ENCODE measurements at regions of chr2 and their contacts with region 1.

Region 1: GRCh38 chr2:64644177-64645004 is 9.3 kb downstream of the SERTAD2 start:
- DNase-seq: peak; percentile 62
- ATAC-seq: peak; percentile 67
- H3K4me3 ChIP-seq: peak overlapping the region; percentile 46 to 65 (median 54)
- H3K27ac ChIP-seq: peak overlapping the region; percentile 70
- H3K4me1 ChIP-seq: peaks cover 100% of the 10 kb centered on the region
- H3K27me3 ChIP-seq: no peaks in the 10 kb centered on the region
- CTCF ChIP-seq: no peak
- EP300 ChIP-seq: no peak
- POLR2A ChIP-seq: peak in 1 of 2 experiments; percentile 36; a peak in 1 of 4 replicates
- RAD21 ChIP-seq: no peak

Region 2: GRCh38 chr2:64586883-64587481 is 57.4 kb before region 1 on chr2:
- CTCF ChIA-PET with region 1: no interaction called
- POLR2A ChIA-PET with region 1: no interaction called
- in situ Hi-C with region 1: no loop called
- intact Hi-C with region 1: loop called (anchors 2 kb)
- DNase-seq: peak; percentile 35
- ATAC-seq: no peak
- H3K4me3 ChIP-seq: no peak overlapping the region
- H3K27ac ChIP-seq: no peak overlapping the region
- H3K4me1 ChIP-seq: no peaks in the 10 kb centered on the region
- H3K27me3 ChIP-seq: no peaks in the 10 kb centered on the region
- CTCF ChIP-seq: peak; percentile 72
- EP300 ChIP-seq: no peak
- POLR2A ChIP-seq: no peak
- RAD21 ChIP-seq: peak; percentile 40; the same call in 1 of the 2 replicates

Region 3: DNA sequence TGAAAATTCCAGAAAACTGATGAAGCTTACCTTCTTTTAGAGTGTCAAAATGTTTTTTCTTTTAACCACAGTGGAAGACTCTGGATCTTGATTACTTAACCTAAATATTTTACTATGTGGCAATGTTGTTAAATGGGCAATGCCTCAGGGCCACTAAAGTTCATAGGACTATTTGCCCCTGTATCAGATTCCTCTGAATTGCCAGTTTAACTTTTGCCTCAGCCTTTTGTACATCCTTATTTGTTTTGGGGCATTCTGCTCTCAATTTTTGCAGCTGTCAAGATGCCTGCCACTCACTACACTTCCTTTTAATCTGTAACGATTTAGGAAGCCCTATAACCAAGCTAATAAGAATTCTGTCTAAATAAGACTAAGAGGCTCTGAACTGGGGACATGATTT is 41.0 kb after region 1 on chr2:
- CTCF ChIA-PET with region 1: no interaction called
- POLR2A ChIA-PET with region 1: no interaction called
- in situ Hi-C with region 1: no loop called
- intact Hi-C with region 1: no loop called
- DNase-seq: peak; percentile 88
- ATAC-seq: peak; percentile 93
- H3K4me3 ChIP-seq: no peak overlapping the region; a peak in 1 of 6 replicates
- H3K27ac ChIP-seq: peak overlapping the region; percentile 28
- H3K4me1 ChIP-seq: peaks cover 48% of the 10 kb centered on the region
- H3K27me3 ChIP-seq: no peaks in the 10 kb centered on the region
- CTCF ChIP-seq: no peak
- EP300 ChIP-seq: peak in 1 of 2 experiments; percentile 88; a peak in 2 of 4 replicates
- POLR2A ChIP-seq: no peak
- RAD21 ChIP-seq: no peak

Region 4: DNA sequence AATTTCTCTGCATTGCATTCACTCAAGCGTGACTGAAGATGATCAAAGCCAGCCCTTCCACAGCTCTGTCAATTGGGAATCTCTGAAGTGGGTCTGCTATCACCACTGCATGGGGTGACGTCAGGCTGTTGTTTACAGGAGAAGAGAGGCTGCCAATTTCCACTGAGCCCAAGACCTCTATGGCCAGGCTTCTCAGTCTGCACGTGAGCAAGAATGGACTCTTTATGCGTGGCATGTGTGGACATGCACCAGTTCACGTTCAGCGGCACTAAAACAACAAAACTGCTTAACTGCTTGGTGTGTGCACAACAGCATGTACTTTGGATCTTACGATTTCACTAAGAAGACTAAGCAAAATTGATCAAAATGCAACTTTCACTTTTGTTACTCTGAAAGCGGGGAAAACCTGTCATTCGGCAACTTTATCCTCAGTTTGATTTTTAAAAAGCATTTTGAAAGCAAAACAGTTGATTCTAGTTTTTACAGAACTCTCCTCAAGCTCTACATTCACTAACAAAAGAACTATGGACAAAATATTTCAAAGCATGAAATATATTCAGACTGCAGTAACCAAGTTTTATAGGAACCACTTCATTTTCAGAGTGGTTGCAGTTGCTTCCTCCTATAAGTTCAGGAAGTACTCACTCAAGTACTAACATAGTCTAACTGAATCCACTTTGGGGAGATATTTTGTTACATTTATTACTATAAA is 86.3 kb after region 1 on chr2:
- CTCF ChIA-PET with region 1: no interaction called
- POLR2A ChIA-PET with region 1: interaction called, 13 read pairs
- in situ Hi-C with region 1: no loop called
- intact Hi-C with region 1: loop called (anchors 2 kb)
- DNase-seq: peak; percentile 94
- ATAC-seq: peak; percentile 91
- H3K4me3 ChIP-seq: peak overlapping the region; percentile 10 to 59 (median 46)
- H3K27ac ChIP-seq: peak overlapping the region; percentile 83
- H3K4me1 ChIP-seq: peaks cover 76% of the 10 kb centered on the region
- H3K27me3 ChIP-seq: no peaks in the 10 kb centered on the region
- CTCF ChIP-seq: no peak
- EP300 ChIP-seq: peak; percentile 81 to 89; a peak in 3 of 4 replicates
- POLR2A ChIP-seq: peak in 1 of 2 experiments; percentile 64; a peak in 2 of 4 replicates
- RAD21 ChIP-seq: no peak

Region 5: DNA sequence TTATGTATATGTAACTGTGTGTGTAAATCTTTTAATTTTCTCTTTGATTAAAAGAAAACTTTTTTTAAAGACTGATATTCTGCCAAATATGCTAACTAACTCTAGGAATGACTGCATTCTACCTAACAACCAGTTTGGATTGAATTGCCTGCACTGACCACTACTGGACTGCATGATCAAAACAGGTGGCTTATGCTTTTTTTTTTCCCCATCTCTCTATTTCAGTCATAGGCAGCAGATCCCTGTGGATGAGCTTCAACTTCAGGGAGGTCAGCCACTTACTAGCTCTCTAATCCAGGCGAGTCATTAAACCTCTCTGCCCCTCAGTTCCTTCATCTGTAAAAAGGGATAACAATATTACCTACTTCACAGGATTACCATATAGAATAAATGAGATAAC is 147.9 kb after region 1 on chr2:
- CTCF ChIA-PET with region 1: no interaction called
- POLR2A ChIA-PET with region 1: no interaction called
- in situ Hi-C with region 1: no loop called
- intact Hi-C with region 1: loop called (anchors 1 kb)
- DNase-seq: peak; percentile 21
- ATAC-seq: peak; percentile 71
- H3K4me3 ChIP-seq: no peak overlapping the region
- H3K27ac ChIP-seq: no peak overlapping the region
- H3K4me1 ChIP-seq: peaks cover 11% of the 10 kb centered on the region
- H3K27me3 ChIP-seq: peaks cover 0 to 31% of the 10 kb centered on the region in 2 experiments; a peak in 4 of 5 replicates
- CTCF ChIP-seq: peak; percentile 33
- EP300 ChIP-seq: no peak
- POLR2A ChIP-seq: no peak
- RAD21 ChIP-seq: no peak

Region 6: GRCh38 chr2:64807417-64807816 is 163.0 kb after region 1 on chr2:
- CTCF ChIA-PET with region 1: no interaction called
- POLR2A ChIA-PET with region 1: no interaction called
- in situ Hi-C with region 1: no loop called
- intact Hi-C with region 1: no loop called
- DNase-seq: no peak
- ATAC-seq: no peak
- H3K4me3 ChIP-seq: no peak overlapping the region
- H3K27ac ChIP-seq: no peak overlapping the region
- H3K4me1 ChIP-seq: no peaks in the 10 kb centered on the region
- H3K27me3 ChIP-seq: peaks cover 0 to 20% of the 10 kb centered on the region in 2 experiments; a peak in 2 of 5 replicates
- CTCF ChIP-seq: no peak
- EP300 ChIP-seq: no peak
- POLR2A ChIP-seq: no peak
- RAD21 ChIP-seq: no peak

Region 7: DNA sequence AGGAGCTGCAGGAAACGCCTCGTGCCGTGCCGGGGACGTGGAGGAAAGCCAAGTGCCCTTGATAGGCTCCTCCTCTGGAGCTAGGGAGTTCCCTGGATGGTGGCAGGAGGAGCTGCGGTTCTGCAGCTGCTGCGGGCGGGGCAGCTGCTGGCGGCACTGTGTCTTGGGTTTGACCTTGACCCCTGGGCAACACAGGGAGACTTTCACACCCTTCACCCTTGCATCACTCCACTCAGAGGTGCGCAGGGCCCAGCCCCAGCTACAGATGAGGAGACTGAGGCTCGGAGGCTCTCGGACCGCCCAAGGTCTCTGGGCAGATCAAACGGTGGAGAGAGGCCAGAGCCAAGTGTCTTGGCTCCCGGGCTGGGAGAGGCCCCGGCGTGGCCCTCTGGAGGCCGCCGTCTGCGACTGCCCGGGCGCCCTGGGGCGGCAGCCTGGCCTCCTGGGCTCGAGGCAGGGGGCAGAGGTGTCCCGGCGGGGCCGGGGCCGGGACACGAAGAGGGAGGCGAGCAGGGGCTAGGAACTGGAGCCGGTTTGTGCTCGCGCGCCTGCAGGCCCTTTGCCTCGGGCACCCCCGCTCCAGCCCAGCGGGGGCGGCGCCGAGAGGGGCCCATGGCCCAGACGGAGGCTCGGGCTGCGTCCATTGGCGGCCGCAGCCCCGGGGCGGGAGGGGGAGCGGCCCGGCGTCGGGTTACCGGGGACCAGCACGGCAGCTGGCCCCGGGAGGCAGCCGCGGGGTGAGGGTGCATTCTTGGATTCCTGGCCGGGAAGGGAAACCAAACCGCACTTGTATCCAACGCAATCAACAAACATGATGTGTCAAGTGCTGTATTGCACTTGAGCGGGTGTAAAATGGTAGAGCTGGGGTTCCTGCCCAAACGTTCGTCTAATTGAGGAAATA is 215.2 kb after region 1 on chr2:
- CTCF ChIA-PET with region 1: interaction called, 22 read pairs
- POLR2A ChIA-PET with region 1: interaction called, 4 read pairs
- in situ Hi-C with region 1: loop called (anchors 5 kb)
- intact Hi-C with region 1: loop called (anchors 1 kb)
- DNase-seq: no peak
- ATAC-seq: peak; percentile 76
- H3K4me3 ChIP-seq: peak overlapping the region; percentile 46 to 76 (median 57)
- H3K27ac ChIP-seq: no peak overlapping the region
- H3K4me1 ChIP-seq: peaks cover 52% of the 10 kb centered on the region
- H3K27me3 ChIP-seq: peaks cover 5 to 55% of the 10 kb centered on the region in 2 experiments
- CTCF ChIP-seq: no peak; the same call in 1 of the 2 replicates
- EP300 ChIP-seq: peak in 1 of 2 experiments; percentile 27; a peak in 1 of 4 replicates
- POLR2A ChIP-seq: no peak
- RAD21 ChIP-seq: no peak